ENCODE measurements at regions of chr7 and their contacts with region 1.

Region 1: GRCh38 chr7:112798274-112799159 is 8.3 kb upstream of the TMEM168 start:
- DNase-seq: no peak
- H3K27ac ChIP-seq: no peak overlapping the region
- CTCF ChIP-seq: no peak

Region 2: DNA sequence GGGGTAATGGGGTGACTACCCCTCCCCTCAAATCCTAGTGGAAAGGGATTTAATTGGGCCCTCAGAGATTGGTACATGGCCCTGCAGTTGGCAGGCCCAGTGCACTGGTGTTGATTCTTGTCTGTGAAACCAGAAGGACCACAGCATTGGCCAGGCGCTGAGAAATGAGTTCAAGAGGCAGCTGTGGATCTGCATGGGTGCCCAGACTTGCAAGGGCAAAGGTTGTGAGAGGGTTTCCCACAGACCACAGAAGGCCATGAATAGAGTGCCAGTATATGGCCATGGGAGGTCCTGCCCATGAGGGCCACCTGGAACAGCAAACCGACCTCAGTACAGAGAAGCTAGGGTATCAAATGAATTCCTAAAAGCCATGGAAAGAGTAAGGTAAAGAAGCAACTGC is 41.2 kb before region 1 on chr7:
- CTCF ChIA-PET with region 1: no interaction called
- POLR2A ChIA-PET with region 1: interaction called, 10 read pairs
- DNase-seq: no peak
- H3K27ac ChIP-seq: no peak overlapping the region
- CTCF ChIP-seq: no peak

Measured in RWPE1 (cell line).